ENCODE measurements at regions of chr15 and their contacts with region 1.

Region 1: DNA sequence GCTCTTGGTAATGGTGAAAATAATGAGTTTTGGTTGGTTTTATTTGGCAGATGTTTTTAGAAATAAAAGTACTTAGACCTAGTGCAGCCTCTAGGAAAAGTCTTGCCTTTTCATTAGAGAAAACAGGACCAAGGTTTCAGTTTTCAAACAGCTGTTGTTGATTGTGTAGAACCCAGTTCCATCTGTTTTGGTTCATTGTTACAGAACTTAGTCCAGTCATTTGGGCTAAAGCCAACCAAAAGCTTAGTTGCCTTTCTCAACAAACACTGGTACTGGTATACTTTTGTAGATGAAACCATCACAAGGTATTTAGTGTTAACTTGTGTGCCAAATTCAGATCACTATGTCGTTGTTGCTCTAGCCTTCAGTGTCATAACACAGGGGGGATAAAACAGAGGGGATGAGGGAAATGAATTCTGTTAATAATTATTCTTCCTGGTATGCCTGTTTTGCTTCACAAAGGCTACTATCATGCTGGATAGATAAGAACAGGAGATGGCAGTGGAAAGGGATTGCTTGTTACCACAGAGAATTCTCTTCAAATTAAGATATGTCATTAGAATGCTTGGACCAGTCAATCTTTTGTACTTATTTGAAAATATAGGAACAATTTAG is 12.6 kb upstream of the APH1B start:
- DNase-seq: no peak
- H3K4me3 Mint-ChIP-seq: no peak overlapping the region
- H3K27ac Mint-ChIP-seq: no peak overlapping the region
- H3K4me1 Mint-ChIP-seq: peaks cover 9% of the 10 kb centered on the region
- H3K27me3 Mint-ChIP-seq: no peaks in the 10 kb centered on the region

Region 2: DNA sequence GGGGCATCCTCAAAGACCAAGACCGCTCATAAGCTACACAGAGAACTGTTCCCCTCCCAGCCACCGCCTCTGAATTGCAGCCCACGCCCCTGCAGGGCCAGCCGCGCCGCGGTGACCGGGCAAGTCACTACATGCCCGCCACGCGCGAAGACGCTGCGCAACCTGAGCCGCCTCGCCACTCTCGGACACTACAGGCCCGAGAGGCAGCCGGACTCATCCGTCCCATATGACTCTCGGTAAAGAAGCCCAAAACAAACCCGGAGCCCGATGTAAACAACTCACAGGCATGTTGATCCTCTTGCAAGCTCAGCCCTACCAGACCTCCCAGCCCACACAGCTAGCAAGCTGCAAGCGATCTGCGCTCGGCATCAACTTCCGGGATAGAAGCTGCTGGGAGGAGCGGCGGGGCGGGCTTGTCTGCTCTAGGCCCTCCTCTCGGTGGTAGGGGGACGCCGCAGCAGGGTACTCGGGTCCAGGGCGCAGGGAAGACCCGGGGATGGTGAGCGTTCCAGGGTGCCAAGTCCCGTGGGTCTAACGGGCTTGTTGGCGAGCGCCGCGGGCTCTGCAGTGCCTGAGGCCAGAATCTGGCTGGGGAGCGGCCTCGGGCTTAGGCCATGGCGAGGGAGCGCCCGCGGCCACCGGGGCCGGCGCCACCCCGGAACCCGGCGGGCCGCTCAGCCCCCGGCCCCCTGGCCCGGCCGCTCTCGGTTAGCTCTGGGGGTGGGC is 107.5 kb before region 1 on chr15 and contains the start of gene RPS27L:
- CTCF ChIA-PET with region 1: interaction called, 10 read pairs
- POLR2A ChIA-PET with region 1: no interaction called
- DNase-seq: peak; percentile 94
- H3K4me3 Mint-ChIP-seq: peak within 1 kb of the TSS; percentile 95
- H3K27ac Mint-ChIP-seq: peak within 1 kb of the TSS; percentile 98
- H3K4me1 Mint-ChIP-seq: peaks cover 28% of the 10 kb centered on the region
- H3K27me3 Mint-ChIP-seq: no peaks in the 10 kb centered on the region
- total RNA-seq, gene RPS27L: 219 to 226 TPM

Measured in activated CD4-positive, alpha-beta T cell treated with anti-CD3 and anti-CD28 coated beads, Interleukin-2, amount 10 ng/mL, durations not matched to agents 7 days and 5 days (primary cell).